K562 (cell line): ENCODE measurements at regions of chr2 and their contacts with region 1.

Region 1: GRCh38 chr2:39059366-39059952 is 61.4 kb downstream of the SOS1 start:
- DNase-seq: peak in 3 of 4 experiments; percentile 13 to 48 (median 28)
- ATAC-seq: peak; percentile 70
- H3K4me3 ChIP-seq: no peak overlapping the region
- H3K27ac ChIP-seq: no peak overlapping the region
- H3K4me1 ChIP-seq: no peaks in the 10 kb centered on the region
- H3K27me3 ChIP-seq: no peaks in the 10 kb centered on the region
- CTCF ChIP-seq: peak; percentile 50 to 87 (median 52); a peak in 4 of 6 replicates
- EP300 ChIP-seq: no peak
- POLR2A ChIP-seq: no peak
- RAD21 ChIP-seq: peak; percentile 85 to 87

Region 2: GRCh38 chr2:38925982-38926381 is 133.5 kb before region 1 on chr2:
- CTCF ChIA-PET with region 1: no interaction called
- POLR2A ChIA-PET with region 1: no interaction called
- in situ Hi-C with region 1: no loop called
- intact Hi-C with region 1: loop called (anchors 1 kb)
- DNase-seq: peak; percentile 20 to 63 (median 39)
- ATAC-seq: peak; percentile 98
- H3K4me3 ChIP-seq: no peak overlapping the region
- H3K27ac ChIP-seq: no peak overlapping the region
- H3K4me1 ChIP-seq: no peaks in the 10 kb centered on the region
- H3K27me3 ChIP-seq: peaks cover 4 to 6% of the 10 kb centered on the region in 2 experiments; a peak in 3 of 5 replicates
- CTCF ChIP-seq: peak; percentile 70 to 74 (median 72)
- EP300 ChIP-seq: no peak
- POLR2A ChIP-seq: no peak
- RAD21 ChIP-seq: peak; percentile 16 to 69; a peak in 2 of 4 replicates

Region 3: GRCh38 chr2:39300044-39300978 is 240.9 kb after region 1 on chr2:
- CTCF ChIA-PET with region 1: no interaction called
- POLR2A ChIA-PET with region 1: no interaction called
- in situ Hi-C with region 1: no loop called
- intact Hi-C with region 1: no loop called
- DNase-seq: no peak
- ATAC-seq: no peak
- H3K4me3 ChIP-seq: no peak overlapping the region
- H3K27ac ChIP-seq: no peak overlapping the region
- H3K4me1 ChIP-seq: no peaks in the 10 kb centered on the region
- H3K27me3 ChIP-seq: no peaks in the 10 kb centered on the region
- CTCF ChIP-seq: no peak
- EP300 ChIP-seq: no peak
- POLR2A ChIP-seq: no peak
- RAD21 ChIP-seq: no peak